ENCODE measurements at regions of chr1 and their contacts with region 1.

Region 1: GRCh38 chr1:90488451-90488850 is 228.7 kb downstream of the BARHL2 start:
- DNase-seq: no peak
- ATAC-seq: no peak
- H3K4me3 ChIP-seq: no peak overlapping the region
- H3K27ac ChIP-seq: no peak overlapping the region
- H3K4me1 ChIP-seq: no peaks in the 10 kb centered on the region
- H3K27me3 ChIP-seq: no peaks in the 10 kb centered on the region
- CTCF ChIP-seq: no peak
- EP300 ChIP-seq: no peak
- POLR2A ChIP-seq: no peak
- RAD21 ChIP-seq: no peak

Region 2: DNA sequence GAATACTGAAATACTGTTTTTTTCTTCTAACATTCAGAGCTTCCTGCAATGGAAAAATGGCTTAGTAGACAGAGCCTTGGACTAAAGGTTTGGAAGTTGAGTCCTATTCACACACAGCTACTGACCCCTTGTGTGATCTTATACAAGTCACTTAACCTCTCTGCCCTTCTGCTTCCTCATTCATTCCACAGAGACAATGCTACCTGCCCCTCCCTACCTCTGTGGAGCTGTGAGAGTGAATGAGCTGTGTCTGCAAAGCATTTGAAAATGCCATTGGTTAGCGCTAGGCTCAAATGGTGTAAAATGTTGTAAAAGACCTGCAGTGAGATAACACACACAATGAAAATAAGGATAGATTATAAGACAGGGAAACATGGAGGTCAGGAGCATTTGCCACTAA is 14.2 kb after region 1 on chr1:
- CTCF ChIA-PET with region 1: interaction called, 7 read pairs
- POLR2A ChIA-PET with region 1: interaction called, 22 read pairs
- RAD21 ChIA-PET with region 1: interaction called, 110 read pairs
- SMC1A ChIA-PET with region 1: interaction called, 78 read pairs
- in situ Hi-C with region 1: no loop called
- intact Hi-C with region 1: no loop called
- DNase-seq: no peak
- ATAC-seq: peak; percentile 24; the same call in 2 of the 3 replicates
- H3K4me3 ChIP-seq: no peak overlapping the region
- H3K27ac ChIP-seq: no peak overlapping the region
- H3K4me1 ChIP-seq: no peaks in the 10 kb centered on the region
- H3K27me3 ChIP-seq: no peaks in the 10 kb centered on the region
- CTCF ChIP-seq: no peak
- EP300 ChIP-seq: no peak
- POLR2A ChIP-seq: no peak
- RAD21 ChIP-seq: no peak

Region 3: DNA sequence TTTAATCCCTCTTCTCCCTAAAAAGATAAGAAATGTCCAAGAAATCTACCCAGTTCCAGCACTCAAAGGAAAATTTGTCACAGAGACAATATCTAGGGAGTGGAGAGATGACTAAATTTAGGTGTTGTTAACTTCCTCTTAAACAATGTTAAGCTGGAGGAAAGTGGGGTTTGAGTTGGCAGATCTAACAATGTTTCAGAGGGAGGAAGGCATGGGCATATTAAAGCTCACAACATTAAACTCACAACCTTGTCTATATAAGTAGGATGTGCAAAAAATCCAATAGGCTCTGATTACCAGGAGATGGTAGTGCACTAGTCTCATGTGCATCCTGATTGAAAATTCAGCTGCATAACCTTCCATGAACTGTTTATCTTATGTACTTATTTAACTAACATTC is 38.5 kb after region 1 on chr1:
- CTCF ChIA-PET with region 1: interaction called, 3 read pairs
- POLR2A ChIA-PET with region 1: interaction called, 16 read pairs
- RAD21 ChIA-PET with region 1: interaction called, 23 read pairs
- SMC1A ChIA-PET with region 1: interaction called, 46 read pairs
- in situ Hi-C with region 1: no loop called
- intact Hi-C with region 1: no loop called
- DNase-seq: no peak
- ATAC-seq: peak; percentile 57
- H3K4me3 ChIP-seq: no peak overlapping the region
- H3K27ac ChIP-seq: no peak overlapping the region
- H3K4me1 ChIP-seq: no peaks in the 10 kb centered on the region
- H3K27me3 ChIP-seq: no peaks in the 10 kb centered on the region
- CTCF ChIP-seq: no peak
- EP300 ChIP-seq: no peak
- POLR2A ChIP-seq: no peak
- RAD21 ChIP-seq: no peak

Region 4: GRCh38 chr1:90534663-90535295 is 46.3 kb after region 1 on chr1:
- CTCF ChIA-PET with region 1: interaction called, 13 read pairs
- POLR2A ChIA-PET with region 1: interaction called, 22 read pairs
- RAD21 ChIA-PET with region 1: interaction called, 23 read pairs
- SMC1A ChIA-PET with region 1: interaction called, 46 read pairs
- in situ Hi-C with region 1: no loop called
- intact Hi-C with region 1: no loop called
- DNase-seq: no peak
- ATAC-seq: peak; percentile 64
- H3K4me3 ChIP-seq: no peak overlapping the region
- H3K27ac ChIP-seq: no peak overlapping the region
- H3K4me1 ChIP-seq: no peaks in the 10 kb centered on the region
- H3K27me3 ChIP-seq: peaks cover 0 to 3% of the 10 kb centered on the region in 2 experiments; a peak in 1 of 4 replicates
- CTCF ChIP-seq: no peak; a peak in 1 of 6 replicates
- EP300 ChIP-seq: 0 out of 4 replicates have a peak, but pooled peaks of 1 of the 2 experiments have one; percentile 28
- POLR2A ChIP-seq: no peak
- RAD21 ChIP-seq: no peak

Region 5: GRCh38 chr1:90640325-90640724 is 151.9 kb after region 1 on chr1:
- CTCF ChIA-PET with region 1: no interaction called
- POLR2A ChIA-PET with region 1: no interaction called
- RAD21 ChIA-PET with region 1: no interaction called
- SMC1A ChIA-PET with region 1: no interaction called
- in situ Hi-C with region 1: no loop called
- intact Hi-C with region 1: no loop called
- DNase-seq: no peak
- ATAC-seq: no peak
- H3K4me3 ChIP-seq: no peak overlapping the region
- H3K27ac ChIP-seq: no peak overlapping the region
- H3K4me1 ChIP-seq: no peaks in the 10 kb centered on the region
- H3K27me3 ChIP-seq: no peaks in the 10 kb centered on the region; a peak in 1 of 4 replicates
- CTCF ChIP-seq: no peak
- EP300 ChIP-seq: no peak
- POLR2A ChIP-seq: no peak
- RAD21 ChIP-seq: no peak

Measured in GM12878 (cell line).